ENCODE measurements at regions of chr19 and their contacts with region 1.

Region 1: DNA sequence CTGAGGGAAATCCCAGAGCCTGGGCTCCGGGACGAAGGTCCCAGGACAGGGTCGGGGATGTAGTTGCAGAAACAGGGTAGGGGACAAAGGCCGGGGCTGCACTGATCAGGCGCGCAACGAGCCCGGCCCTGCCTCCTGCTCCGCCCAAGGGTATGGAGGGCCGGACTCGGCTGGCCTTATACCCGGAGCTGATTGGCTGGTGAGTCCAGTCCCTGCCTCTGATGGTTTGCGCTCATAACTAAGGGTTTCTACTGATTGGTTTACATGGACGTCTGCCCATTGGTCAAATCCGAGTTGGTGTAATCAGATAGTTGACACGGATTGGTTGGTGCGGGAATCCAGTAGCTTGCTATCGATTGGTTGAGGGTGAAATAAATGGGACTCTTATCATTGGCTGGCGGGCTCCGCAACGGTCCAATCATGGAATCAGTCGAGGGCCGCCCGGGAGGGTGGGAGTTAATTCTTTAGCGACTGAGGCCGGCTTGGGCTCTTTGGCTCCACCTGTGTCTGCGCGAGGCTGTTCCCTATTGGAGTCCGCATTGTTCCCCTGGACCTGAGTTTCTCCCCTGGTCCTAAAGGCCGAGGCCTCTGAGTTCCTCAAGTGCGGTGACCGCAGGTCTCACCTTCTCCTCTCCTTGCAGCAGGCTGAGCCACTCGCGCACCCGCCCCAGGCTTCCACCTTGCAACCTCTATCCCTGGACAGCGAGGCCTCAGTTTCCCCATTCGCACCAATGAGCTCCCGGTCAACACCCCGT is 570 bp upstream of the MPND start:
- DNase-seq: peak; percentile 98
- ATAC-seq: peak; percentile 92
- H3K4me3 Mint-ChIP-seq: peak overlapping the region; percentile 89
- H3K27ac Mint-ChIP-seq: peak overlapping the region; percentile 94
- H3K4me1 Mint-ChIP-seq: peaks cover 31% of the 10 kb centered on the region
- H3K27me3 Mint-ChIP-seq: no peaks in the 10 kb centered on the region

Region 2: DNA sequence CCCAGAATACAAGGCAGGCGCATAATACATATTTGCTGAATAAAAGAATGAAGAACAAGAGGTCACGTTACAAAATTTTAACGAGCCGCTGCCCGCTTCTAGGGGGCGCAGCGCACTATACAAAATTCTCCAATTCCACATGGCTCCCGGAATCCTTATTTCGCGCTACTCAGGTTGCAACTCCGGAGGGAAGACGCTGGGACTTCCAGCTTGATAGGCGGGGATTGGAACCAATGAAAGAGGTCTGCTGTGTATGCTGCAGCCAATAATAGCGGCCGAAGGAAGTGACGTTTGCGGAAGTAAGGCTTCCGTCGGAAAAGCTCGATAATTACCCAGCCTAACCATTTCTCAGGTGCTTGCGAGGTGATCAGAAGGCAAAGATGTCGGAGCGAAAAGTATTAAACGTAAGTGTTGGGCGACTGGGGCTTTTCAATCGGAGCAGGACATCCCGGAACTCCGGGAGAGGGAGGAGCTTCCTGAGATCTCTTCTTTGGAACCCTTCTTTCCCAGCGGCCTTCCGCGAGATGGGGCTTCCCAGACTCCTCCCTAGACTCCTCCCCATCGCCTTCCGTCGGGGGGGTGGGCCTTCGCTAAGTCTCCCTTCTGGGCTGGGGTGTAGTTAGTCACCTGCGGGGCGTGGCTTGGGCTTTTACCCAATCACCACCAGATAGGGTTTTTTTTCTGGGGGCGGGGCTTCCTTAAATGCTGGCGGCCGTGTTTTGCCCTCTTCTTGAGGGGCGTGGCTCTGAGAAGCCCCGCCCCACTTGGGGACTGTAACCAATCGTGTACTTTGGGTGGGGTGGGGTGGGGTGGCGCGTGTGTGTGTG is 95.8 kb before region 1 on chr19 and contains the start of gene YJU2:
- CTCF ChIA-PET with region 1: interaction called, 9 read pairs
- POLR2A ChIA-PET with region 1: interaction called, 13 read pairs
- DNase-seq: peak; percentile 100
- ATAC-seq: peak; percentile 98
- H3K4me3 Mint-ChIP-seq: peak within 1 kb of the TSS; percentile 84
- H3K27ac Mint-ChIP-seq: peak within 1 kb of the TSS; percentile 96
- H3K4me1 Mint-ChIP-seq: peaks cover 22% of the 10 kb centered on the region
- H3K27me3 Mint-ChIP-seq: peaks cover 2% of the 10 kb centered on the region
- total RNA-seq, gene YJU2: 24.8 to 26.1 TPM

Region 3: GRCh38 chr19:4322942-4323665 is 19.7 kb before region 1 on chr19:
- CTCF ChIA-PET with region 1: interaction called, 12 read pairs
- POLR2A ChIA-PET with region 1: interaction called, 5 read pairs
- DNase-seq: no peak
- ATAC-seq: no peak
- H3K4me3 Mint-ChIP-seq: no peak overlapping the region
- H3K27ac Mint-ChIP-seq: no peak overlapping the region
- H3K4me1 Mint-ChIP-seq: peaks cover 19% of the 10 kb centered on the region
- H3K27me3 Mint-ChIP-seq: peaks cover 4% of the 10 kb centered on the region

Region 4: GRCh38 chr19:4369888-4370260 is 27.1 kb after region 1 on chr19:
- CTCF ChIA-PET with region 1: interaction called, 12 read pairs
- POLR2A ChIA-PET with region 1: no interaction called
- DNase-seq: peak; percentile 87
- ATAC-seq: peak; percentile 79
- H3K4me3 Mint-ChIP-seq: peak overlapping the region; percentile 69
- H3K27ac Mint-ChIP-seq: peak overlapping the region; percentile 96
- H3K4me1 Mint-ChIP-seq: peaks cover 68% of the 10 kb centered on the region
- H3K27me3 Mint-ChIP-seq: no peaks in the 10 kb centered on the region

Measured in activated CD8-positive, alpha-beta T cell treated with anti-CD3 and anti-CD28 coated beads, Interleukin-2, amount 10 ng/mL, durations not matched to agents 7 days and 5 days (primary cell).